ENCODE measurements at regions of chr16 and their contacts with region 1.

Region 1: DNA sequence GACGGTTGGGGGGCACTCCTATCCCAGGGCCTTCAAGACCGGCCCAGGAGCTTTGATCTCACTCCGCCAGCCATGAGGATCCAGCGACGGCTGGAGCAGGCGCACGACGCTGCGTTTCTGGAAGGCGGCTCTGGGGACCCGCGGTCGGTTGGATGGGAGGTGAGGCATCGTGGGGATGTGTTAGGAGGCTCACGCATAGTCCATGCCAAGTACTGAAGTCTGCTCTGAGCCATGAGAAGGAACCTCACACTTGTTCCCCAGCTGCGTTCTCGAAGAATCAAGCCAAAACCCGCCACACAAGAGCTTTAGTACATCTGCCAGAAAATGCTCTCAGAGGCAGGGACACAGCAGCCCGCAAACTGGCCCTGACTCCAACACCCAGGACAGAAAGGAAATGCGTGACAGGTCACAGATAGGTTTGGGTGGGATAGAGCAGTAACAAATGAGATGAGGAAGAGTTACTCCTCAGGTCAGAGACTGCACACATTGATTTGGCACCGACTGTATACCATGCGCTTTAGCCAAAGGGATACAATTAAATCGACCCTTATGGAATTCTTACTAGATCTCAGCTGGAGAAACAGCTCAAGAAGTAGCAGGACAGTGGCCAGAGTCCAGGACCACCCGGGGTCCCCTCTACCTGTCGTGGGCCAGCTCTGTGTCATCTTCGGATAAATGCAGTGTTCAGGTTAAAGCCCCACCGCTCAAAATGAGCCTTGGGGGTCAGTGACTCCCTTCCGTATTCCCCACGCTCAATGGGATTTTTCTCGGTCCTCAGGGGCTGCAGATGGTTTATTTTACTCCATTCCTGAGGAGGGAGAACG is 6.7 kb upstream of the GSG1L start:
- DNase-seq: no peak
- ATAC-seq: no peak
- H3K4me3 ChIP-seq: no peak overlapping the region
- H3K27ac ChIP-seq: no peak overlapping the region
- H3K4me1 ChIP-seq: no peaks in the 10 kb centered on the region
- H3K27me3 ChIP-seq: peaks cover 23% of the 10 kb centered on the region
- CTCF ChIP-seq: no peak
- POLR2A ChIP-seq: no peak
- RAD21 ChIP-seq: no peak

Region 2: DNA sequence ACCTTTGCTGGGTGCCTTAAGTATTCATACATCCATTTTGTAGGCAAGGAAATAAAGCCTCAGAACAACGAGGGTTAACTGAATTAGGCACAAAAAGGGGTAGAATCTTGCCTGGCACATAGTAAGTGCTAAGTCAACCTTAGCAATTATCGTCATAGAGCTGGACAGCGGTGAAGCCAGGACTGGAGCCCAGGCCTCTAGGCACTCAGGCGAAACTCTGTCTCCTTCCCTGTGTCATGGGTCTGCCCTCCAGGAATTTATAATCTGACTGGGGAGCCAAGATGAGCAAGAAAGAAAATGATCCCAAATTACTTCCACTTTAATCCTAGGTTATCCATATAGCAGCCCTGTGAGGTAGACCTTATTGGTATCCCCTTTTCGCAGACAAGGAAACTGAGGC is 458.8 kb before region 1 on chr16:
- CTCF ChIA-PET with region 1: no interaction called
- POLR2A ChIA-PET with region 1: no interaction called
- dilution Hi-C with region 1: no loop called
- in situ Hi-C with region 1: no loop called
- intact Hi-C with region 1: loop called (anchors 1 kb)
- DNase-seq: no peak
- ATAC-seq: no peak
- H3K4me3 ChIP-seq: no peak overlapping the region
- H3K27ac ChIP-seq: no peak overlapping the region
- H3K4me1 ChIP-seq: no peaks in the 10 kb centered on the region
- H3K27me3 ChIP-seq: no peaks in the 10 kb centered on the region
- CTCF ChIP-seq: no peak
- POLR2A ChIP-seq: no peak
- RAD21 ChIP-seq: no peak

Region 3: GRCh38 chr16:27639561-27640276 is 430.5 kb before region 1 on chr16:
- CTCF ChIA-PET with region 1: interaction called, 10 read pairs
- POLR2A ChIA-PET with region 1: no interaction called
- dilution Hi-C with region 1: no loop called
- in situ Hi-C with region 1: loop called (anchors 10 kb)
- intact Hi-C with region 1: loop called (anchors 1 kb)
- DNase-seq: peak; percentile 65
- ATAC-seq: peak; percentile 84
- H3K4me3 ChIP-seq: no peak overlapping the region
- H3K27ac ChIP-seq: no peak overlapping the region
- H3K4me1 ChIP-seq: peaks cover 4% of the 10 kb centered on the region; the same call in 1 of the 2 replicates
- H3K27me3 ChIP-seq: no peaks in the 10 kb centered on the region
- CTCF ChIP-seq: peak; percentile 76
- POLR2A ChIP-seq: no peak
- RAD21 ChIP-seq: peak; percentile 87

Region 4: GRCh38 chr16:27779641-27780164 is 290.5 kb before region 1 on chr16:
- CTCF ChIA-PET with region 1: interaction called, 4 read pairs
- POLR2A ChIA-PET with region 1: no interaction called
- dilution Hi-C with region 1: no loop called
- in situ Hi-C with region 1: loop called (anchors 10 kb)
- intact Hi-C with region 1: loop called (anchors 1 kb)
- DNase-seq: peak; percentile 46
- ATAC-seq: peak; percentile 88
- H3K4me3 ChIP-seq: no peak overlapping the region
- H3K27ac ChIP-seq: no peak overlapping the region
- H3K4me1 ChIP-seq: no peaks in the 10 kb centered on the region
- H3K27me3 ChIP-seq: no peaks in the 10 kb centered on the region
- CTCF ChIP-seq: peak; percentile 53
- POLR2A ChIP-seq: no peak
- RAD21 ChIP-seq: peak; percentile 53

Region 5: DNA sequence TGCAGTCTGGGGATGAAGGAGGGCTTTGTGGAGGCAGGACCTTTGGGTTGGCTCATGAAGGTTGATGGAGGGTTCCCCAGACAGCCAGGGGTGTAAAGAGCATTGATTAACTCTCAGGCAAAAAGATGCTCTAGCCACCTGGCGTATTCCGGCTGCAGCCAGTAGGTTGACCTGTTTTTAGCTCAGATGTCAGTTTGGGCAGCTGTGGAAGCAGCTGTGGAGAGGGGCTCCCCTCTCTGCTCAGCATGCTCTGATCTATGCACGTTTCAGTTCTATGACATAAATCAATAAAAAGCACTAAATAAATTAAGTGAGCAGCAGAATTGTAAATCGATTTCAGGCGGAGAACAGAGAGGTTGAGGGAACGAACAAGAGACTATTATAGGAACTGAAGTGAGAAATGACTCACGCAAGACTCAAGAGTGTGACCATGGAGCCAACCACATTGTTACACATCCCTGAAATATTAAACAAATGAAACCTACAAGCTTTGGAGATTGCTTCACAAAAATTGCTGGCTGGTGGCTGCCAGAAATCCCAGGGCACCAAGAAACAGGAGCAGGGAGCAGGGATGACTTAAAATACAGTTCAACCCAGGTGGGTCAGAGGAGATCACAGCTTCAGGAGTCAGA is 118.6 kb before region 1 on chr16:
- CTCF ChIA-PET with region 1: no interaction called
- POLR2A ChIA-PET with region 1: no interaction called
- dilution Hi-C with region 1: no loop called
- in situ Hi-C with region 1: no loop called
- intact Hi-C with region 1: no loop called
- DNase-seq: peak; percentile 43
- ATAC-seq: no peak
- H3K4me3 ChIP-seq: no peak overlapping the region
- H3K27ac ChIP-seq: no peak overlapping the region
- H3K4me1 ChIP-seq: no peaks in the 10 kb centered on the region
- H3K27me3 ChIP-seq: peaks cover 10% of the 10 kb centered on the region
- CTCF ChIP-seq: no peak
- POLR2A ChIP-seq: no peak
- RAD21 ChIP-seq: no peak

Region 6: DNA sequence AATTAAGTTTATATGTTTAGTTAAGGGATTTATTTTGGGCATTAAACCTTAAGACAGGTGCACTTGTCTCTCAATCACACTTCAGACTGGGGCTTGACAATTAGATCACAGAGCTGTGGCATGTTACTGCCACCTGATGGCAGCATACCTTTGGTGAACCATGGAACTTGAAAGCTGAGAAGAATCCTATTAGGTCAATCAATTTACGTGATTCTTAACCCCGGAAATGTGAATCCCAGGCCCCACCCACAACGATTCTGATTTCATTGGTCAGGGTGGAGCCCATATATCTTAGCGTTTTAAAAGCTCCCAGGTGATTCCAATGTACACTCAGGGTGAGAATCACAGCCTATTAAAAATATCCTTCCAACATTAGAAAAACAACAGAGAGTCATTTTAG is 97.7 kb before region 1 on chr16:
- CTCF ChIA-PET with region 1: interaction called, 4 read pairs
- POLR2A ChIA-PET with region 1: no interaction called
- dilution Hi-C with region 1: no loop called
- in situ Hi-C with region 1: loop called (anchors 10 kb)
- intact Hi-C with region 1: loop called (anchors 1 kb)
- DNase-seq: peak; percentile 30
- ATAC-seq: no peak
- H3K4me3 ChIP-seq: no peak overlapping the region
- H3K27ac ChIP-seq: no peak overlapping the region
- H3K4me1 ChIP-seq: no peaks in the 10 kb centered on the region
- H3K27me3 ChIP-seq: peaks cover 8% of the 10 kb centered on the region
- CTCF ChIP-seq: peak; percentile 46
- POLR2A ChIP-seq: no peak
- RAD21 ChIP-seq: peak; percentile 47

Region 7: DNA sequence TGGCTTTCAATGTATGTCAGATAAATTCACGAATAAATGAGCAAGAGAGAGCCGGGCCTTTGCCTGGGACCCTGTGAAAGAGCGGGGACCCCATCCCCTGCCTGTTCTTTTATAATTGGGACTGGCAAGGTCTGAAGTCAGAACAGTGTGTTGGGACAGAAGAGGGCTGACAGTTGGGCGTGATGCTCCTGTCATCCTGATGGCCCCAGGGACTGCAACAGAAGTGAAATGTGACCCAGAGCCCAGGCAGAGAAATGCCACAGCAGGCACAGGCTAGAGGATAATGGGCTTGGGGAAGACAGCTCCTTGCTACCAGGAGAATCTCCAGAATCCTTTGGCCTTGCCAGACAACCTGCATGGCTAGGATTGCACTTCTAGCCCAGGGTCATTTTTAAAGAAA is 44.6 kb before region 1 on chr16:
- CTCF ChIA-PET with region 1: no interaction called
- POLR2A ChIA-PET with region 1: no interaction called
- dilution Hi-C with region 1: no loop called
- in situ Hi-C with region 1: no loop called
- intact Hi-C with region 1: no loop called
- DNase-seq: no peak
- ATAC-seq: no peak
- H3K4me3 ChIP-seq: no peak overlapping the region
- H3K27ac ChIP-seq: no peak overlapping the region
- H3K4me1 ChIP-seq: no peaks in the 10 kb centered on the region
- H3K27me3 ChIP-seq: peaks cover 2% of the 10 kb centered on the region; the same call in 1 of the 2 replicates
- CTCF ChIP-seq: no peak
- POLR2A ChIP-seq: no peak
- RAD21 ChIP-seq: no peak